OCI-LY7 (cell line): ENCODE measurements at regions of chr4 and their contacts with region 1.

Region 1: DNA sequence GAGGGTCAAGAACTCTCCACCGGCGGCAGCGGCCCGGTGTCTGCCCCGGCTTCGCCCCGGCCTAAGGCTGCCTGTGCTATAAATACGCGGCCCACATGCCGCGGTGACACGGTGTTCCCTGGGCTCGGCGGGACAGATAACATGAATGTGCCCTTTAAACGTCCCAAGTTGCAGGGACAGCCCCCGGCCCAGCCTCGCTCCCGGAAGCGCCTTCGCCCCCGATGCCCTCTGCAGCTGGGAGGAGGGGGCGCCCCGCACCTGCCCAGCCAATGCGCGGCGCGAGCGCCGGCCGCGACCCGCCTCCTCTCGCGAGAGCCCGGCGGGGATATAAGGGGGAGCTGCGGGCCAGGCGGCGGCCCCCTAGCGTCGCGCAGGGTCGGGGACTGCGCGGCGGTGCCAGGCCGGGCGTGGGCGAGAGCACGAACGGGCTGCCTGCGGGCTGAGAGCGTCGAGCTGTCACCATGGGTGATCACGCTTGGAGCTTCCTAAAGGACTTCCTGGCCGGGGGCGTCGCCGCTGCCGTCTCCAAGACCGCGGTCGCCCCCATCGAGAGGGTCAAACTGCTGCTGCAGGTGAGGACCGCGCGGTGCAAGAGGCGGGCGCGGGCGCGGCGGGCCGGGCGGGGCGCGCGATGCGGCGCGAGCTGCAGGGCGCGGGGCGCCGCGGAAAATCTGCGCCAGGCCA is at the start of gene SLC25A4:
- DNase-seq: peak; percentile 93
- H3K4me3 ChIP-seq: peak within 1 kb of the TSS; percentile 91
- H3K27ac ChIP-seq: peak within 1 kb of the TSS; percentile 30
- H3K4me1 ChIP-seq: peaks cover 19% of the 10 kb centered on the region
- CTCF ChIP-seq: peak; percentile 63
- total RNA-seq, gene SLC25A4: 24.1 and 29.6 TPM in 2 replicates

Region 2: DNA sequence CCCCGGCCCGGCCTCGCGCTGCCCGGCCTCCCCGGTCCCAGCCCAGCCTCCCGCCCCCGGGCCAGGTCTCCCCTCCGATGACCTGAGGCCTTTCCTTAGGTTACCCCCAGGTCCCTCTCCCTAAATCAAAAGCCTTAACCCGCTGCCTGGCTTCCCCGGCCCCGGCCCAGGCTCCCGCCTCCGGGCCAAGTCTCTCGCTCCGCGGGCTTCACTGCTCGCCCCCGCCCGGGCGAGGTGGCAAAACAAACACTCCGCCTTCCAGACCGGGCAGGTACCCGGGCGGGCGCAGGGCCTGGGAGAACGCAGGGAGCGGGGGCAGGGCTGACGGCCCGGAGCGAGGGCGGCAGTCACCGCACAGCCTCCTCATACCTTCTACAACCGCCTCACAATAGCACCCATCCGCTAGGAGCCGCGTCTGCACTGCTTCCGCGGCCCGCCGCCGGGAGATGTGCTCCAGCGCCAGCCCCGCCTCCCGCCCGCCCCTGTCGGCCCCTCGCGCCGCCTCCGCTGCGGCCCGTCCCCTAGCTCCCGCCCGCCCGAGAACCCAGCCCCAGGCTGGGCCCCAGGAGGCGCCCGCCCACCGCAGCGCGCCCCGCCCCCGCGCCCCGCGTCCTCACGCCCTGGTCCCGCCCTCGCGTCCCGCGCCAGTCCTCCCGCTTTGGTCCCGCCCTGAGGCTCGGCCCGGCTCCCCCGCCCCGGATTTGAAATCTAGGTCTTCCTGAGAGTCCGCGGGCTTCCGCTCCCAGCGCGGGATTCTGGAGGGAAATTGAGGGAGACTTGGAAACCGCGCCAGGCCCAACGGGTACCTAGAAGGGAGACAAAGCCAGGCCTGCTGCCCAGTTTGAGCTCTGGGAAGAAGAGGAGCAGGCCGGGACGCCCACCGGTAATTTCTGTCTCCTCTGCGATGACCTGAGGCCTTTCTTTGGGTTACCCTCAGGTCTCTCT is 493.8 kb before region 1 on chr4 and contains the starts of genes CASP3 and PRIMPOL:
- CTCF ChIA-PET with region 1: no interaction called
- POLR2A ChIA-PET with region 1: no interaction called
- intact Hi-C with region 1: loop called (anchors 2 kb)
- DNase-seq: peak; percentile 96
- H3K4me3 ChIP-seq: peak within 1 kb of the TSS; percentile 93
- H3K27ac ChIP-seq: peak within 1 kb of the TSS; percentile 79
- H3K4me1 ChIP-seq: peaks cover 42% of the 10 kb centered on the region
- CTCF ChIP-seq: 0 out of 2 replicates have a peak, but pooled peaks have one; percentile 21
- total RNA-seq, gene CASP3: 25.8 and 29.5 TPM in 2 replicates
- total RNA-seq, gene PRIMPOL: 8.8 and 9.2 TPM in 2 replicates

Region 3: DNA sequence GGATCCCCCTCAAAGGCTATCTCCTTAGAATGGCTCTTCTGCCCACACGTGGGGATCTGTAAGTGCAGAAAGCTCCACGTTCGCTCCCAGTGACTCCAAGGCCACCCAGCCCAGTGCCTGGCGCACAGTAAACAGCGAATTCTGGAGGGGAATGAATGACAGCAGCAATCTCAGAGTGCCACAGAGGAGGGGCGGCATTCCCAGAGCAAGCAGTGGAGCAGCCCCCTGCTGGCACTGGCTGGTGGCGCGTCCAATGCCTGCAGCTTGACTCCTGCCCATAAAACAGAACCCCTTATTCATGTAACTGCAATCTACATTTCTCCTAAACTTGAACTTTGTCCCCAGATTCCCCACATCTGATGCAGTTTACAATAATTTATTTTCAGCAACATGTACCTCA is 131.6 kb before region 1 on chr4:
- CTCF ChIA-PET with region 1: no interaction called
- POLR2A ChIA-PET with region 1: no interaction called
- intact Hi-C with region 1: no loop called
- DNase-seq: peak; percentile 24
- H3K4me3 ChIP-seq: no peak overlapping the region
- H3K27ac ChIP-seq: no peak overlapping the region
- H3K4me1 ChIP-seq: no peaks in the 10 kb centered on the region
- CTCF ChIP-seq: peak; percentile 76

Region 4: GRCh38 chr4:185183619-185184281 is 40.7 kb after region 1 on chr4:
- CTCF ChIA-PET with region 1: interaction called, 3 read pairs
- POLR2A ChIA-PET with region 1: no interaction called
- intact Hi-C with region 1: loop called (anchors 5 kb)
- DNase-seq: peak; percentile 85
- H3K4me3 ChIP-seq: no peak overlapping the region
- H3K27ac ChIP-seq: no peak overlapping the region
- H3K4me1 ChIP-seq: peaks cover 11% of the 10 kb centered on the region
- CTCF ChIP-seq: peak; percentile 98

Region 5: DNA sequence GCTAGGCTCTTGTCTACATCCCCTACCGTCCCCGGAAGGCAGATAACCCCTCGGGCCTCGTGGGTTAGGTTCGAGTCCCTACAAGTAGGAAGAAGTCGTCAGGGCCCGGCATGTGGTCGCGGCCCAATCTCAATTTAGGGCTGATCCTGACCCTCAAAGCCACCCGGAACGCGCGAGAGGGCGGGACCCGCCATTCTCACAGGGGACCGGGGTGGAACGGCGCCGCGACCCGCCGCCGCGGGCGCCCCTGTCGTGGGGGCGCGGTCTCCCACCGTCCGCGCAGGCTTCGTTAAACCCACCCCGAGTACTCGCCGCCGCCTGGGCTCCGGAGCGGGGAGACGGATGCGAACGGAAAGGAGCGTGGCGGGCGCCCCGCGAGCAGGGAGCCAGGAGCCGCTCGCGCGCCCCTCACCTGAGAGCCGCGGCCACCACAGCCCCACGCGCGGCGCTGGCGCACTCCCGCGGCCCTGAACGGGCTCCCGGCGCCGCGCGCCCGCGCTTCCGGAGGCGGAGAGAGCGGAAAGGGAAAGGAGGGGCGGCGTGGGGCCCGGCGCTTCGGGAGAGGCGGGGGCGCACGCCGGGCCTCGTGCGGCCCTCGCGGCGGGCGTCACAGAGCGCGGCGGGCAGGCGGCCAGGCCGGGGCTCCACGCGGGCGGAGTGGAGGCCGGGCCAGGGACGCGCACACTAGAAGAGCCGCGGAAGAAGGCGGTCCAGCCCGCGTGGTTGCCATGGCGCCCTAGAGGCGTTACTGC is 60.6 kb after region 1 on chr4 and contains the start of gene CFAP97:
- CTCF ChIA-PET with region 1: no interaction called
- POLR2A ChIA-PET with region 1: interaction called, 3 read pairs
- intact Hi-C with region 1: loop called (anchors 1 kb)
- DNase-seq: peak; percentile 76
- H3K4me3 ChIP-seq: peak within 1 kb of the TSS; percentile 78
- H3K27ac ChIP-seq: peak within 1 kb of the TSS; percentile 76
- H3K4me1 ChIP-seq: peaks cover 41% of the 10 kb centered on the region
- CTCF ChIP-seq: no peak
- total RNA-seq, gene CFAP97: 20.4 and 22.7 TPM in 2 replicates